ENCODE measurements at regions of chr12 and their contacts with region 1.

Region 1: DNA sequence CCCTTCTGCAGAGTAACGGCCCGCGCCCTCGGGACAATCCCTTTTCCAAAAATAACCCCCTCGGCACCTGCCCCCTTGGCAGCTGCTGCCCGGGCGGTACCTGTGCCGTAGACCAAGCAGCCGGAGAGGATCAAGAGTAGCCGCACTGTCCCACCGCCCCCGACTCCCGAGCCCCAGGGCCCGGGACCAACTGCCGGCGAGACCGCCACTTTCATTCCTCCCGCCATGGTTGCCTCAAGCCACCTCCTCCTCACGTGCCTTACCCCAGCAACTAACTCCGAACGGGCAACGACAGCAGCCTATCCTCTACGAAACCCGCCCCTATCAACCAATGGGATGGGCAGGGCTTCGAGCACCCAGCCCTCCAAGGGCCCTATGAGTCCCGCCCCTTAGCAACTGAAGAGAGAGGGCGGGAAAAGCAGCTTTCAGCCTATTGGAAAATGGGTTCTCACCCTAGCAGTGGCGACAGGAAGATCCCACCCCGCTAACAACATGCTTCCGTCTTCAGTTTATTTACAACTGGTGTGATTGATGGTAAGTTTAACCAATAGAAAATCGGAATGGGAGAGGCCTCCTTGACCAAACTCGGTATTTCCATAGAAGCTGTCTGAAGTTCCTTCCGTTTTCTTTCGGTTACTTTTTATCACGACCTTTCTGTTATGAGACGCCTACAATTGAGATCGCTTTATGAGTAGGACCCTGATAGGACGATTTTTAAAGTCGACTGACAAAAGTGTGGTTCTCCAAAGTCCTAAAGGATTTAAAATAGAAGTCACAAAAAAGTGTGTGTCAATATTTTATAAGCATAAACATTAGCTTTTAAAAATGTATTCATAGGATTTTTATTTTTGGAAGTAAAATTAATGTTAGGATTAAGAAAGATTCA is at the start of gene NEMP1:
- DNase-seq: peak; percentile 94 to 100 (median 99)
- H3K4me3 ChIP-seq: peak within 1 kb of the TSS; percentile 73 to 94
- H3K4me3 Mint-ChIP-seq: peak within 1 kb of the TSS; percentile 92 to 98 (median 94)
- H3K27ac ChIP-seq: peak within 1 kb of the TSS; percentile 75
- H3K27ac Mint-ChIP-seq: peak within 1 kb of the TSS; percentile 86 to 98 (median 96)
- H3K4me1 ChIP-seq: peaks cover 18% of the 10 kb centered on the region
- H3K4me1 Mint-ChIP-seq: peaks cover 10 to 37% (median 18%) of the 10 kb centered on the region in 4 donors
- H3K27me3 ChIP-seq: no peaks in the 10 kb centered on the region
- H3K27me3 Mint-ChIP-seq: no peaks in the 10 kb centered on the region
- total RNA-seq, gene NEMP1: 27.2 TPM

Region 2: GRCh38 chr12:57096099-57096572 is 17.4 kb after region 1 on chr12:
- CTCF ChIA-PET with region 1: interaction called, 184 read pairs
- POLR2A ChIA-PET with region 1: interaction called, 154 read pairs
- intact Hi-C with region 1: no loop called
- DNase-seq: no peak
- H3K4me3 ChIP-seq: no peak overlapping the region
- H3K4me3 Mint-ChIP-seq: no peak overlapping the region
- H3K27ac ChIP-seq: no peak overlapping the region
- H3K27ac Mint-ChIP-seq: peak overlapping the region in 5 of 7 donors; percentile 18 to 88 (median 55)
- H3K4me1 ChIP-seq: peaks cover 42% of the 10 kb centered on the region
- H3K4me1 Mint-ChIP-seq: peaks cover 14 to 43% (median 28%) of the 10 kb centered on the region in 4 donors
- H3K27me3 ChIP-seq: no peaks in the 10 kb centered on the region
- H3K27me3 Mint-ChIP-seq: no peaks in the 10 kb centered on the region

Region 3: GRCh38 chr12:57101844-57102695 is 23.3 kb after region 1 on chr12:
- CTCF ChIA-PET with region 1: interaction called, 458 read pairs
- POLR2A ChIA-PET with region 1: interaction called, 22 read pairs
- intact Hi-C with region 1: no loop called
- DNase-seq: no peak
- H3K4me3 ChIP-seq: no peak overlapping the region
- H3K4me3 Mint-ChIP-seq: no peak overlapping the region
- H3K27ac ChIP-seq: peak overlapping the region; percentile 8
- H3K27ac Mint-ChIP-seq: peak overlapping the region in 6 of 7 donors; percentile 43 to 66 (median 56)
- H3K4me1 ChIP-seq: peaks cover 9% of the 10 kb centered on the region
- H3K4me1 Mint-ChIP-seq: peaks cover 5 to 10% (median 6%) of the 10 kb centered on the region in 4 donors
- H3K27me3 ChIP-seq: no peaks in the 10 kb centered on the region
- H3K27me3 Mint-ChIP-seq: no peaks in the 10 kb centered on the region

Region 4: DNA sequence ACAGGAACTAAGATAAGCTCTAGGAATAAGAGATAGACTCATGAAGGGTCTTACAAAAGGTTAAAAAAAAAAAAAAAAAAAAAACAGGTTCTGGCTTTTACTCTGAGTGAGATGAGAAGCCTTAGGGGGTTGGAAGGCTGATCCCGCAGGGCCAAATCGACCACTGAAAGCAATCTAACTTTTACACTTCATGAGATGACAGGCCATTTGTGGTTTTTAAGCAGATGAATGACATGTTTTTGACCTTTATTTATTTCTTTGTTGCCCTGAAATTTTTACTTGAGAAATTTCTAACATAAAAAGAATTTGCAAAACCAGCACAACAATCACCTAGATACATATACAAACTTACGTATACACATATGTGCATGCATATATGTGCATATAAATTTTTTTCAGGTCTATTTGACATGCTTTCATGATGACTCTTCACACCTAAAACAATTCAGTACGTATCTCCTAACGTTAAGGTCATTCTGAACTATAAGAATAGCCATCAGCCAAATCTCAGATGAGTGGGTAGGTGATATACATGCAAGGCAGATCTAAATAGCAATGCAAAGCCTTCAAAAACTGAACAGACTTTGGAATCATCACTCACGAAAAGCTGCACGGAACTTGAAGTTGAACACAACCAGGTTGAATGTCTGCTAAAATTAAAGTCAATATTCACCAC is 265.1 kb after region 1 on chr12:
- CTCF ChIA-PET with region 1: no interaction called
- POLR2A ChIA-PET with region 1: no interaction called
- intact Hi-C with region 1: no loop called
- DNase-seq: no peak
- H3K4me3 ChIP-seq: no peak overlapping the region
- H3K4me3 Mint-ChIP-seq: no peak overlapping the region
- H3K27ac ChIP-seq: no peak overlapping the region
- H3K27ac Mint-ChIP-seq: no peak overlapping the region
- H3K4me1 ChIP-seq: no peaks in the 10 kb centered on the region
- H3K4me1 Mint-ChIP-seq: peaks cover 5 to 21% (median 10%) of the 10 kb centered on the region in 4 donors
- H3K27me3 ChIP-seq: no peaks in the 10 kb centered on the region
- H3K27me3 Mint-ChIP-seq: no peaks in the 10 kb centered on the region